ENCODE measurements at regions of chr6 and their contacts with region 1.

Region 1: DNA sequence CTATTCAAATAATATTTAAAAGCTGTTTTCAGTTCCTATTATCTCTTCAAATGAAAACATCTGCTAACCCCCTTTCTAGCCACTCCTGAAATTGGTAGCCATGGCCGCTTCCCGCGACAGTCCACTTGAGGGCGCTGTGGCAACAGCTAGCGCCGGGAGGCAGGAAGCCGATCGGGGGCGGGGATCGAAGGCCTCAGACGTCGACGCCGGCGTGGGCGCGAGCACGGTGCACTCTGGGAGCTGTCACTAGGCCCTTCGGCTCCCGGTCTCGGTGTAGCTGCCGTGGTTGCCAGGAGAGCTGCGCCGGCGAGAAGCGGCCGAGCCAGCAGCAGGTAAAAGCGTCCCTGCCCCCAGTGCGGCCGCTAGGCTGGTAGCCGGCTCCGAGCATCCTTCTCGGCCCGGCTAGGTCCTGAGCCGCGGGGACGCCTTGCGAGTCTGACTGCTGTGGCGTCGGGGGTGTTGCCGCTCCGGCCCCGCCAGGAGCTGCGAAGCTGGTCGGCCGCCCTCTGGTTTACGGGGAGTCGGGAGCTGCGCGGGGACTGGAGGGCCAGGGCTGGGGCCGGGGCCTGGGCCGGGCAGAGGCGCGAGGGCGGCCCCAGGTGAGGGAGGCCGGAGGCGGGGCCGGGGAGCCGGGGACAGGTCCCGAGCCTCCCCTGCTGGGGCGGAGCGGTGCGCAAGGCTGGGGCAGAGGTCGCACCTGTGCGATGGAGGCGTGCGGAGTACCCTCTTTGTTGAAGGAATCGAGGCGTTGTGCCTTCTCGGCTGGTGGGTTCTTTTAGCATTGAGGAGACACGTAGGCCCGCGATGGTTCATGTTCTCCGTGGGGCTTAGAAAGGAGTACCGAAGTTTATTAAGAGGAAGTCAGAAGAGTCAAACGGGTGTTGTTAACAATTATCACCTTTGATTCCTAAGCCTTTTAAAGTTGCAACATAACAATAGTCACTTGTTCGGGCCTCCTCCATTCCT is at the start of gene DOP1A:
- DNase-seq: peak; percentile 97
- ATAC-seq: peak; percentile 92
- H3K4me3 Mint-ChIP-seq: peak within 1 kb of the TSS; percentile 90
- H3K27ac Mint-ChIP-seq: peak within 1 kb of the TSS; percentile 89
- H3K4me1 Mint-ChIP-seq: peaks cover 44% of the 10 kb centered on the region
- H3K27me3 Mint-ChIP-seq: no peaks in the 10 kb centered on the region
- total RNA-seq, gene DOP1A: 14.9 to 18.9 TPM

Region 2: GRCh38 chr6:82247634-82248232 is 820.0 kb before region 1 on chr6 and contains the start of gene IBTK:
- CTCF ChIA-PET with region 1: interaction called, 34 read pairs
- POLR2A ChIA-PET with region 1: interaction called, 5 read pairs
- DNase-seq: peak; percentile 92
- ATAC-seq: peak; percentile 97
- H3K4me3 Mint-ChIP-seq: peak within 1 kb of the TSS; percentile 95
- H3K27ac Mint-ChIP-seq: peak within 1 kb of the TSS; percentile 92
- H3K4me1 Mint-ChIP-seq: peaks cover 36% of the 10 kb centered on the region
- H3K27me3 Mint-ChIP-seq: no peaks in the 10 kb centered on the region
- total RNA-seq, gene IBTK: 24.4 to 24.5 TPM

Region 3: DNA sequence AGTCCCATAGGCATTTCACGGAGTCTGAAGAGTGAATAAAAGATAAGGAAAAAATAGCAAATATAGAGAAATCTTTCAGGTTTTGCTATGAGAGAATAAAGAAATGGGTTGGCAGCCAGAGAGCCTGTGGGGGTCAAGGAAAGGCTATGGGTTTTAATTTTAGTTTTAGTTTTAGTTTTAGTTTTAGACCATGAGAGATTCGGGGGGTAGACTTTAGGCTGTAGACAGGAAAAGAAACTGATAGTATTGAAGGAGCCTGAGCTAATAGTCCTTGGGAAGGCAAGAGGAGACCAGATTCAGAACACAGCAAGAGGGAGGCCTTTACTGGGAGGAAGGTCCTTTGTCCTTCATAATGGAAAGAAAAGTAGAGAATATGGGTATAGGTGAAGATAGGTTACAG is 19.0 kb after region 1 on chr6:
- CTCF ChIA-PET with region 1: interaction called, 46 read pairs
- POLR2A ChIA-PET with region 1: interaction called, 4 read pairs
- DNase-seq: peak; percentile 25
- ATAC-seq: peak; percentile 75
- H3K4me3 Mint-ChIP-seq: peak overlapping the region; percentile 70
- H3K27ac Mint-ChIP-seq: peak overlapping the region; percentile 88
- H3K4me1 Mint-ChIP-seq: peaks cover 27% of the 10 kb centered on the region
- H3K27me3 Mint-ChIP-seq: no peaks in the 10 kb centered on the region

Region 4: GRCh38 chr6:83183082-83183828 is 115.5 kb after region 1 on chr6:
- CTCF ChIA-PET with region 1: interaction called, 105 read pairs
- POLR2A ChIA-PET with region 1: no interaction called
- DNase-seq: no peak
- ATAC-seq: no peak
- H3K4me3 Mint-ChIP-seq: no peak overlapping the region
- H3K27ac Mint-ChIP-seq: no peak overlapping the region
- H3K4me1 Mint-ChIP-seq: peaks cover 5% of the 10 kb centered on the region
- H3K27me3 Mint-ChIP-seq: no peaks in the 10 kb centered on the region

Region 5: GRCh38 chr6:83215131-83216047 is 147.7 kb after region 1 on chr6:
- CTCF ChIA-PET with region 1: interaction called, 272 read pairs
- POLR2A ChIA-PET with region 1: no interaction called
- DNase-seq: peak; percentile 73
- ATAC-seq: peak; percentile 91
- H3K4me3 Mint-ChIP-seq: no peak overlapping the region
- H3K27ac Mint-ChIP-seq: no peak overlapping the region
- H3K4me1 Mint-ChIP-seq: no peaks in the 10 kb centered on the region
- H3K27me3 Mint-ChIP-seq: peaks cover 18% of the 10 kb centered on the region

Measured in activated CD8-positive, alpha-beta T cell treated with anti-CD3 and anti-CD28 coated beads, Interleukin-2, amount 10 ng/mL, durations not matched to agents 7 days and 5 days (primary cell).